Left colon (tissue), 2 donors: ENCODE measurements at regions of chr17 and their contacts with region 1.

Region 1: DNA sequence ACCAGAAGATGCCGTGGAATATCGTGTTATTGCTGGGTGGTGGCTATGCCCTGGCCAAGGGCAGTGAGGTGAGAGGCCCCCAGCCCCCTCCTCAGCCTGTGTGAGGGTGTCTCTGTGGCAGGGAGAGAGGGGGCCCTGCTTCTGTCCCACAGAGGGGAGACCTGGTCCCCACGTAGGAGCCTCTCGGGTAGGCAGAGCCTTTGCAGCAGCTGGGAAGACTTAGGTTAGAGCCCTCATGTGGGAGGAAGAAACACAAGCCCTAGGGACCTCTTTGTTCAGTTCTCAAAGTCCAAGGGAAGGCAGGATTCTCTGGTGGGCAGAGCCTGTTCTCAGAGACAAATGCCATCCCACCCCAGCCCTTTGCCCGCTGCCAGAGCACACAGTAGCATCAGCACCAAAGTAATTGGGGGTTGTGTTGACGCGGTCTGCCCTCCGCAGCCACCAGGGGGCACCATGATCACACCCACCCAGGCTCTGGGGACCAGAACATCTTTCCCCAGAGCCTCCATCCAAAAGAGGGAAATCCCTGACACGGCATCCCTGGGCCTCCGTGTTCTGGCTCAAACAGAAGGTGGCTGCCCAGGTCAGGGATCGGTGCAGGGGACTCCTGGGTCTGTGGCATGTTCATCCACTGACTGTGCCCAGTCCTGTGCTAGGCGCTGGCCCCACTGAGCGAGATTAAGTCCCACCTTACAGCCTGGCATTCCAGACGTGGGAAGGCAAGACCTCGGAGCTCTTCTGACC is 11.5 kb upstream of the FOXN1 start:
- DNase-seq: peak in 1 of 2 donors; percentile 82
- ATAC-seq: peak; percentile 39

Region 2: GRCh38 chr17:28532991-28533807 is 38.6 kb after region 1 on chr17:
- intact Hi-C with region 1: loop called in 1 of 2 experiments (anchors 5 kb)
- DNase-seq: no peak
- ATAC-seq: peak; percentile 42

Region 3: GRCh38 chr17:28612936-28613872 is 118.6 kb after region 1 on chr17:
- intact Hi-C with region 1: loop called (anchors 5 kb)
- DNase-seq: peak in 1 of 2 donors; percentile 38
- ATAC-seq: peak; percentile 61